ENCODE measurements at regions of chr5 and their contacts with region 1.

Region 1: GRCh38 chr5:144142139-144142823 is 28.2 kb downstream of the YIPF5 start:
- DNase-seq: no peak

Region 2: DNA sequence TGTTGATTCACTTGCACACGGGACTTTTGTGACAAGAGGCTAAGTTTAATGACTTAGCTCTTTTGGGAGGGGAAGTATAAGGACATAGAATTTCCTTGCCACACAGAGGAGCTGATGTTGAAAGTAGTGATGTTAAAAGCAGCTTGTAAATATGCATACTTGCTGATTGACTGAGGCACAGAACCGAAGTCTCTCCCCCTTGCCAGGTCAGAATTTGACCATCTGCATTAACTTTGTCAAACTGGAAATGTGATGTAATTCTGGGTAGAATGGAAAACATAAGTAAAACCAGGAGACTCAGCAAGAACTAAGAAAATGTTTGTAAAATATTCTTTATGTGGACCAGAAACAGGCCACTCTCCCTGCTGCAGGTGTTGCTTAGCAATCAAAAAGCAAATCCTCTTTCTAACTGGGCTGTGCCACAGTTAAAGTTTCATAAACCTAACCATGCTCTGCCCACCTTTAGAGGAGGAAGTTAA is 1023.0 kb before region 1 on chr5:
- intact Hi-C with region 1: no loop called
- DNase-seq: no peak

Region 3: GRCh38 chr5:144032375-144032774 is 109.9 kb before region 1 on chr5:
- intact Hi-C with region 1: loop called (anchors 5 kb)
- DNase-seq: no peak